ENCODE measurements at regions of chr11 and their contacts with region 1.

Region 1: GRCh38 chr11:62705880-62706849 is 1.1 kb downstream of the BSCL2 start:
- DNase-seq: peak; percentile 88 to 98 (median 95)
- ATAC-seq: peak; percentile 61
- H3K4me3 ChIP-seq: peak overlapping the region; percentile 56 to 59
- H3K4me3 Mint-ChIP-seq: peak overlapping the region; percentile 90
- H3K27ac ChIP-seq: peak overlapping the region; percentile 67 to 73
- H3K27ac Mint-ChIP-seq: peak overlapping the region; percentile 88
- H3K4me1 ChIP-seq: peaks cover 44% of the 10 kb centered on the region
- H3K4me1 Mint-ChIP-seq: peaks cover 44% of the 10 kb centered on the region
- H3K27me3 ChIP-seq: no peaks in the 10 kb centered on the region
- H3K27me3 Mint-ChIP-seq: no peaks in the 10 kb centered on the region
- CTCF ChIP-seq: no peak

Region 2: DNA sequence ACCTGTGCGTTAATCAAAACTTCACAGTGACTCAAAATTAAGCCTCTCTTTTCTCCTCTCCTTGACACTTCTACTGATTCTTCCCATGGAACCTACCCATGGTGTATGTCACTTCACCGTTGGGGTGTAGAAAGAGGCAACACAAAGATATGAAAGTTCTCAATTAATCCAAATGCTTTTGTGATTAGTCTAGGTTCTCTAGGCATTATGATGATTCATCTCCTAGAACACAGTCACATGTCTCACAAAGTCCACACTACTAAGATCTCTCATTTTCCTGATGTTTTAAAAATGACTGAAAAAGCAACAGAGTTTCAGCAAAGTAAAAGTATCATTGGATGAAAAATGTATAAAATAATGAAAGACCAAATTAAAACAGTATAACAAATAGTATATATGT is 449.9 kb before region 1 on chr11:
- CTCF ChIA-PET with region 1: no interaction called
- POLR2A ChIA-PET with region 1: no interaction called
- intact Hi-C with region 1: no loop called
- DNase-seq: no peak
- ATAC-seq: no peak
- H3K4me3 ChIP-seq: no peak overlapping the region
- H3K4me3 Mint-ChIP-seq: no peak overlapping the region
- H3K27ac ChIP-seq: no peak overlapping the region
- H3K27ac Mint-ChIP-seq: no peak overlapping the region
- H3K4me1 ChIP-seq: no peaks in the 10 kb centered on the region
- H3K4me1 Mint-ChIP-seq: no peaks in the 10 kb centered on the region
- H3K27me3 ChIP-seq: no peaks in the 10 kb centered on the region
- H3K27me3 Mint-ChIP-seq: peaks cover 8% of the 10 kb centered on the region
- CTCF ChIP-seq: no peak

Region 3: GRCh38 chr11:62601394-62602140 is 104.6 kb before region 1 on chr11 and contains the start of gene MTA2:
- CTCF ChIA-PET with region 1: interaction called, 3 read pairs
- POLR2A ChIA-PET with region 1: interaction called, 6 read pairs
- intact Hi-C with region 1: loop called in 1 of 2 experiments (anchors 1 kb)
- DNase-seq: peak; percentile 98 to 100 (median 99)
- ATAC-seq: peak; percentile 77
- H3K4me3 ChIP-seq: peak within 1 kb of the TSS; percentile 62 to 98
- H3K4me3 Mint-ChIP-seq: peak within 1 kb of the TSS; percentile 89
- H3K27ac ChIP-seq: peak within 1 kb of the TSS; percentile 83 to 86
- H3K27ac Mint-ChIP-seq: peak within 1 kb of the TSS; percentile 92
- H3K4me1 ChIP-seq: peaks cover 22% of the 10 kb centered on the region
- H3K4me1 Mint-ChIP-seq: peaks cover 57% of the 10 kb centered on the region
- H3K27me3 ChIP-seq: no peaks in the 10 kb centered on the region
- H3K27me3 Mint-ChIP-seq: no peaks in the 10 kb centered on the region
- CTCF ChIP-seq: no peak
- total RNA-seq, gene MTA2: 148 to 154 TPM

Region 4: GRCh38 chr11:62645956-62646824 is 60.0 kb before region 1 on chr11 and contains the start of gene GANAB:
- CTCF ChIA-PET with region 1: no interaction called
- POLR2A ChIA-PET with region 1: no interaction called
- intact Hi-C with region 1: loop called (anchors 1 kb)
- DNase-seq: peak; percentile 96 to 99 (median 99)
- ATAC-seq: peak; percentile 98
- H3K4me3 ChIP-seq: peak within 1 kb of the TSS; percentile 81 to 98
- H3K4me3 Mint-ChIP-seq: peak within 1 kb of the TSS; percentile 98
- H3K27ac ChIP-seq: peak within 1 kb of the TSS; percentile 90 to 98
- H3K27ac Mint-ChIP-seq: peak within 1 kb of the TSS; percentile 98
- H3K4me1 ChIP-seq: peaks cover 27% of the 10 kb centered on the region
- H3K4me1 Mint-ChIP-seq: peaks cover 37% of the 10 kb centered on the region
- H3K27me3 ChIP-seq: no peaks in the 10 kb centered on the region
- H3K27me3 Mint-ChIP-seq: no peaks in the 10 kb centered on the region
- CTCF ChIP-seq: no peak
- total RNA-seq, gene GANAB: 177 to 184 TPM

Region 5: GRCh38 chr11:62678770-62679696 is 27.1 kb before region 1 on chr11 and contains the start of gene UBXN1:
- CTCF ChIA-PET with region 1: interaction called, 11 read pairs
- POLR2A ChIA-PET with region 1: interaction called, 15 read pairs
- intact Hi-C with region 1: loop called (anchors 1 kb)
- DNase-seq: peak; percentile 59 to 92 (median 85)
- ATAC-seq: peak; percentile 74
- H3K4me3 ChIP-seq: peak within 1 kb of the TSS; percentile 91 to 100
- H3K4me3 Mint-ChIP-seq: peak within 1 kb of the TSS; percentile 90
- H3K27ac ChIP-seq: peak within 1 kb of the TSS; percentile 87 to 94
- H3K27ac Mint-ChIP-seq: peak within 1 kb of the TSS; percentile 93
- H3K4me1 ChIP-seq: peaks cover 26% of the 10 kb centered on the region
- H3K4me1 Mint-ChIP-seq: peaks cover 39% of the 10 kb centered on the region
- H3K27me3 ChIP-seq: no peaks in the 10 kb centered on the region
- H3K27me3 Mint-ChIP-seq: no peaks in the 10 kb centered on the region
- CTCF ChIP-seq: no peak
- total RNA-seq, gene UBXN1: 232 to 242 TPM

Region 6: DNA sequence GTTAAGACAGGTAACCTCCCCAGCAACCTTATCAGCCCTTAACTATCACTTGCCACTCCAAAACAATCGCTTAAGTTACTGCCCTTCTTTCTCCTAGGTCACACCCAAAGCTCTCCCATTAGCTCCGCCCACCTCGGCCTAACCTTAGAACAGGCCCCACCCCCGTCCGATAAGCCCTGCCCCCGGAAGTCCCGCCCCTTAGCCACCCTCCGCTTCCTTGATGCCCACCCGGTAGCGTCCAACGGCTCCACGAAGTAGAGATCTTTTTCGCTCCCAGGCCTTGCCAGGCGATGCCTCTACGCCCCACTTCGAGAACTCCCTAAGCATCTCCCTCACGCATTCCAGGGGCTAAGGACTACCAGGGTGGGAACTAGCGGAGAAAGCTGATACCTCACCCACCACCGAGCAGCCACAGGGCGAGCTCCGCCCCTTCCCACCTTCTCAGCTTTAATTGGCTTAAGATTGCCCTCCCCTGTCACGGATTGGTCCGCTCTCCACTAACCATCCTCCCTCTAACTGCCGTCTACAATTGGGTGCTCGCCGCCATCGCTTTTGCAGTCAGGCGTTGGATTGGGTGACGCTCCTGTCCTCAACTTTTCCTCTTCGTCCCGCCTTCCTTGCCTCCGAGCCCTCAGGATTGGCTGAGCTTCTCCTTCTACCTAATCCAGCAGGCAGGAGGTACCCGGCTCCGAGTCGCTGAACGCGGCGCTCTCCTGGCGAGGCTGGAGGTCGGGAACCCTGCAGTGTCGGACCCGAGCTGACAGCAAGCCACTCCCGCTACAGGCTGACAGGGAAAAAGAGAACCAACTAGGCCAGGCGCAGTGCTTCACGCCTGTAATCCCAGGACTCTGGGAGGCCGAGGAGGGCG is 47.8 kb after region 1 on chr11 and contains the start of gene ZBTB3:
- CTCF ChIA-PET with region 1: no interaction called
- POLR2A ChIA-PET with region 1: interaction called, 14 read pairs
- intact Hi-C with region 1: loop called (anchors 1 kb)
- DNase-seq: peak; percentile 93 to 100 (median 96)
- ATAC-seq: peak; percentile 93
- H3K4me3 ChIP-seq: peak within 1 kb of the TSS; percentile 72 to 88
- H3K4me3 Mint-ChIP-seq: peak within 1 kb of the TSS; percentile 99
- H3K27ac ChIP-seq: peak within 1 kb of the TSS; percentile 64 to 91
- H3K27ac Mint-ChIP-seq: peak within 1 kb of the TSS; percentile 98
- H3K4me1 ChIP-seq: peaks cover 28% of the 10 kb centered on the region
- H3K4me1 Mint-ChIP-seq: peaks cover 32% of the 10 kb centered on the region
- H3K27me3 ChIP-seq: no peaks in the 10 kb centered on the region
- H3K27me3 Mint-ChIP-seq: no peaks in the 10 kb centered on the region
- CTCF ChIP-seq: no peak
- total RNA-seq, gene ZBTB3: 3.7 to 4.8 TPM

Region 7: DNA sequence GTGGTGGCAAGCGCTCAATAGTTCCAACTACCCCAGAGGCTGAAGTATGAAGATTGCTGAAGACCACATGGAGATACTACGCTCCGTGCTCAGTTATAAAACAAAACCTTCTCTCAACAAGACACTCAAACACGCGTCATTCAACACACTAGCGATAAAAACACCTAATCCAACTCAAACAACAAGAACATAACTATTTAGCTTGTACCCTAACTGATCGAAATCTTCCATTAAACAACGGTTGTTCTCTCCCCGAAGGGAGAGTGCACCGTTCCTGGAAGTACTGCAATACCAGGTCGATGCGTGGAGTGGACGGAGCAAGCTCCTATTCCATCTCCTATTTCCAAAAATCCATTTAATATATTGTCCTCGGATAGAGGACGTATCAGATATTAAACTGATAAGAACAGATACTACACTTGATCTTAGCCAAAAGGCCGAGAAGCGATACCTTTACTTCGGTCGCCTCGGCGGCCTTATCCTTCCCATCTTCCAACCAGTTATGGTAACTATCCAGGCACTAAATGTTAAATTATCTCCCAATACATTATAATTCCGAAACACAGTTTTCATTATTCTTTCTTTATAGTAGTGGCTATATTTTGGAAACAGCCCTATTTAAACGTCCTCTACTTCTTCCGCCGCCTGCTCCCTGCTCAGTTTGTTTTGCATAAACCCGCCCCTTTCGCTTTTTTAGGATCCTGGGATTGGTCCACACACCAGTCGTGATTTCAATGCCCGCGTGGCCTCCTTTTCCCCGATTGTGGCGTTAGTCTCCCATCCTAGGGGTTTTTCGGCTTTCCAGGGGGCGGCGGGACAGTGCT is 135.4 kb after region 1 on chr11:
- CTCF ChIA-PET with region 1: no interaction called
- POLR2A ChIA-PET with region 1: interaction called, 49 read pairs
- intact Hi-C with region 1: loop called (anchors 1 to 5 kb)
- DNase-seq: peak; percentile 69 to 95 (median 80)
- ATAC-seq: peak; percentile 49
- H3K4me3 ChIP-seq: peak overlapping the region; percentile 61 to 79
- H3K4me3 Mint-ChIP-seq: no peak overlapping the region
- H3K27ac ChIP-seq: peak overlapping the region; percentile 97 to 99
- H3K27ac Mint-ChIP-seq: no peak overlapping the region
- H3K4me1 ChIP-seq: peaks cover 32% of the 10 kb centered on the region
- H3K4me1 Mint-ChIP-seq: peaks cover 25% of the 10 kb centered on the region
- H3K27me3 ChIP-seq: no peaks in the 10 kb centered on the region
- H3K27me3 Mint-ChIP-seq: no peaks in the 10 kb centered on the region
- CTCF ChIP-seq: no peak